ENCODE measurements at regions of chr1 and their contacts with region 1.

Region 1: DNA sequence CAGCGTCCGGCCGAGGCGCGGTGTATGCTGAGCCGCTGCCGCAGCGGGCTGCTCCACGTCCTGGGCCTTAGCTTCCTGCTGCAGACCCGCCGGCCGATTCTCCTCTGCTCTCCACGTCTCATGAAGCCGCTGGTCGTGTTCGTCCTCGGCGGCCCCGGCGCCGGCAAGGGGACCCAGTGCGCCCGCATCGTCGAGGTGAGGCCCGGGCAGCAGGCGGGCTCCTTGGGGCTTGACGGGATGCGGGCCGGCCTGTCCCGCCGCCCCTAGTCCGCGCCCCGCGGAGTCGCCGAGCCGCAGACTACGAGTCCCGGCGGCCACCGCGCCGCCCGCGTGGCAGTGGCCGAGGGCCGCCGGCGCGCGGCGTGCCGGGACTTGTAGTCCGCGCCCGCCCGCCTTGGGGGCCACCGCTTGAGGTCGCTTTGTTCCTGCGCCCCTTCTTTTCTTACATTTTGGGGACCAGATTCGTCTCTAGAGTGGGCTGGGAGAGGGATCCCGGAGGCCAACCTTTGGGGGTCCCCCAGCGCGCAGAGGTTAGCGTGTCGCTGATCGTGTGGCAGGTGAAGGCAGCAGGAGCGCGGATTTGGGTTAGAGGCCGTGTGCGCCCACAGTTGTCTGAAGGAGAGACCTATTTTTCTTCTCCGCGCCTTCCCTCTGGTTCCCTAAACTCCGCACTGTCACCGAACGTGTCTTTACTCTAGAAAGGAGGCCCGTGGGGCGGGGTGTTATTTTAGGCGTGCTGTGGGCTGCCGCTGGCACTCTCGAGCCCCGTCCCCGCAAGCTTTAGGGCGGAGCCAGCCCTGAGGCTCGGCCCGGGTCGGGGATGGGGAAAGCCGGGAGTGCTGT is 553 bp downstream of the CMPK1 start:
- DNase-seq: peak; percentile 92
- H3K4me3 ChIP-seq: peak overlapping the region; percentile 85 to 99
- H3K27ac ChIP-seq: peak overlapping the region; percentile 92 to 96
- H3K4me1 ChIP-seq: peaks cover 17% of the 10 kb centered on the region in 2 experiments
- H3K27me3 ChIP-seq: no peaks in the 10 kb centered on the region
- CTCF ChIP-seq: peak; percentile 49
- EP300 ChIP-seq: no peak
- RAD21 ChIP-seq: no peak

Region 2: GRCh38 chr1:47313915-47314664 is 20.1 kb before region 1 on chr1 and contains the start of gene STIL:
- CTCF ChIA-PET with region 1: interaction called, 3 read pairs
- POLR2A ChIA-PET with region 1: interaction called, 22 read pairs
- DNase-seq: peak; percentile 95
- H3K4me3 ChIP-seq: peak within 1 kb of the TSS; percentile 74 to 95
- H3K27ac ChIP-seq: peak within 1 kb of the TSS; percentile 73 to 90
- H3K4me1 ChIP-seq: peaks cover 2 to 6% of the 10 kb centered on the region in 2 experiments; a peak in 2 of 4 replicates
- H3K27me3 ChIP-seq: no peaks in the 10 kb centered on the region
- CTCF ChIP-seq: no peak
- EP300 ChIP-seq: no peak
- RAD21 ChIP-seq: no peak
- polyA plus RNA-seq, gene STIL: 4.9 and 5.8 TPM in 2 replicates

Region 3: DNA sequence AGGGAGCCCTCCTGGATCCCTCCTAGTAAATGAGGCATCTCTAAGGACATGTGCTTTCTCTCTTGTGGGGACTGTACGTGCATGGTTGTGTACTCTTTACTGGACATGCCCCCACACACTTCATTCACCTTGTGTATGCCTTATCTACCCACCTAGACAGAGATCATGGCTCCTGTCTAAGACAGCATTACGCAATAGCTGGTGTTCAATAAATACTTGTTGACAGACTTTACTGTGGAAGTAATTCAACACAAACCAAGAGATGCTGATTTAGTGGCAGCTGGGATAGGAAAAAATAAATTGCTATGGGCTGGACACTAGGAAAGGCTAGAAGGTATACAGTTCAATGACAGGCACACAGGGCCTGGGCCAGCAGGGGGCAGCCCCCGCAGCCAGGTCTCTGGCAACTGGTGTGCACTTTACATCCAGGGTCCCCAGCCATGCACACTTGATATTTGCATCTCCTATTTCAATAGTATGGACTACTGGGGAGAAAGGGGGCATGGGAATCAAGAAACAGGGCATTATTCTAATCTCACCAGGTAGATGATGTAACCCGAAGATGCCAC is 638.8 kb after region 1 on chr1:
- CTCF ChIA-PET with region 1: no interaction called
- POLR2A ChIA-PET with region 1: no interaction called
- DNase-seq: peak; percentile 51
- H3K4me3 ChIP-seq: no peak overlapping the region
- H3K27ac ChIP-seq: no peak overlapping the region
- H3K4me1 ChIP-seq: peaks cover 0 to 8% of the 10 kb centered on the region in 2 experiments; a peak in 1 of 4 replicates
- H3K27me3 ChIP-seq: no peaks in the 10 kb centered on the region
- CTCF ChIP-seq: peak; percentile 48
- EP300 ChIP-seq: no peak
- RAD21 ChIP-seq: peak; percentile 37

Measured in SK-N-SH (cell line).